ENCODE measurements at regions of chr4 and their contacts with region 1.

Region 1: DNA sequence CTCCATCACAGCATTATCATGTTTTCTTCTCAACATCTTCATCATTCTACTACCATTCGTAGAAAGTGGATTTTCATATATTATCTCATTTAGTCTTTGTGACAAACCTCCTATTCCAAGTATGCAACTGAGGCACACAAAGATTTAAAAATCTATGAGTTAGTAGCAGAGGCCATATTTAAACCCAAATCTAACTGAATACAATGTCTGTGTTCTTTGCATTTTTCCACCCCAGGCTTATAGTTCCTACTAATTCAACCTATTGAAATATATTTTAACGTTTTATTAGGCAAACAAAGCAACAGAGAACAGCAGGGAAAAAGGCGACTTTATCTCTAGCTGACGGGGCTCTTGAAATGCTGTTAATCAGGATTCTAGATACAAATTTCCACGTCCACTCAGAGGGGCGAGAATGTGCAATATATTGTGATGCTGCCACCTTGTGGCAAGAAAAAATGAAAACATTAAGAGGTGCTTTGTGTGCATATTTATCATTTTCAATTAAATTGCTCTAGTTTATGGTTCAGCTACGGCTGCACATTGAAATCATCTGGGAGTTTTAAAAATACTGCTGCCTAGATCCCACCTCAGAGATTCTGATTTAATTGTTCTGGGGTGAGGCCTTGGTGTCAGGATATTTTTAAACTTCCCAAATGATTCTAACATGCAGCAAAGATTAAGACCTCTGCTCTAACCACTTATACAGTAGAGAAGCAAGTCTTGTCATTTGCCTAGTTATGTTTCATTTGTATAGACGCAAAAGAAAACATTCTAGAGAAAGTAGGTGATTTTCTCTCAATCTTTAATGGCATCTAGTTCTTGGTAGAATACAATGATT is 315.9 kb downstream of the MAPK10 start:
- DNase-seq: no peak
- ATAC-seq: no peak

Region 2: DNA sequence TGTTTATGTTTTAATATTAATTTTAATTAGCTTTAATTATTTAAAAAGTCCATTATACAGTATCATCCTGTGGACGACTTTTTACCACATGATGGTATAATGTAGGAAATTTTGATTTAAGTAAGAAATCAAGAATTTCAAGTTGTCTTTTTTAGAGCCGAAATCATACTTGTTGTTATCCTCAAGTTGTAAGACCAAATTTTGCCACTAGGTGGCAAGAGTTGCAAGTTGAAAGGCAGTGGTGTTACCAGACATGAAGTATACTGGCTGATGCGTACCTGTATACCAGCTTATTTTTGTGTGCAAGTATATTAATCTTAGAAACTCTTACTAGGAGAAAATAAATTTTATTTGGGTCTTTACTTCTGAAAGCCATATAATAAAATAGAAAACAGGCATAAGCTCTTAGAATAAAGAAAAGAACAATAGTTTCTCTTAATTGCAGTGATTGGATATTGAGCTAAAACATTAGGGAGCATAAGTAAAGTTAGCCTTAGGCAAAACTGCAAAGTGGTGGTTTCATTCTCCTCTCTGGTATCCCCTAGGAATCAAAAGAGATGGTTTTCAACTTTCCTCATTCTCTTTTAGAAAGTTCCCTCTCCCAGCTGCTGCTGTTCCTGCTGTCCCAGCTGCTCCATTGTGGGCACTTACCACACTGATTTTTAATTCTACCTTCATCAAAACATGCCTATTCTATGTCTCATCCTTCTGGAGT is 959.4 kb before region 1 on chr4:
- intact Hi-C with region 1: loop called (anchors 5 kb)
- DNase-seq: no peak
- ATAC-seq: no peak

Region 3: GRCh38 chr4:85147439-85148076 is 896.4 kb before region 1 on chr4:
- intact Hi-C with region 1: loop called (anchors 5 kb)
- DNase-seq: peak; percentile 84
- ATAC-seq: peak; percentile 74

Region 4: GRCh38 chr4:85795935-85796334 is 248.0 kb before region 1 on chr4:
- intact Hi-C with region 1: loop called (anchors 2 kb)
- DNase-seq: no peak
- ATAC-seq: no peak

Region 5: GRCh38 chr4:85953651-85954018 is 90.3 kb before region 1 on chr4:
- intact Hi-C with region 1: no loop called
- DNase-seq: no peak
- ATAC-seq: no peak

Measured in Right ventricle myocardium inferior (tissue), 1 donor.